ENCODE measurements at regions of chr20 and their contacts with region 1.

Region 1: GRCh38 chr20:54475334-54476168 is at the start of gene DOK5:
- DNase-seq: peak; percentile 52 to 60
- ATAC-seq: peak; percentile 85 to 91 (median 89)
- H3K4me3 ChIP-seq: peak within 1 kb of the TSS; percentile 46 to 85 (median 67)
- H3K27ac ChIP-seq: peak within 1 kb of the TSS in 8 of 10 donors; percentile 35 to 82 (median 60)
- H3K4me1 ChIP-seq: peaks cover 0 to 30% (median 6%) of the 10 kb centered on the region in 9 donors
- H3K27me3 ChIP-seq: peaks cover 0 to 60% (median 4%) of the 10 kb centered on the region in 7 donors
- CTCF ChIP-seq: peak in 1 of 9 donors; percentile 15
- total RNA-seq, gene DOK5: 0.51 to 21.1 (median 9.6) TPM

Region 2: GRCh38 chr20:54219751-54220426 is 255.7 kb before region 1 on chr20:
- intact Hi-C with region 1: loop called in 2 of 10 experiments (anchors 5 to 10 kb)
- DNase-seq: no peak
- ATAC-seq: no peak
- H3K4me3 ChIP-seq: no peak overlapping the region
- H3K27ac ChIP-seq: no peak overlapping the region
- H3K4me1 ChIP-seq: peaks cover 0 to 43% (median 22%) of the 10 kb centered on the region in 9 donors
- H3K27me3 ChIP-seq: no peaks in the 10 kb centered on the region
- CTCF ChIP-seq: peak; percentile 29 to 74 (median 59)

Region 3: GRCh38 chr20:54382422-54382821 is 93.1 kb before region 1 on chr20:
- intact Hi-C with region 1: no loop called
- DNase-seq: no peak
- ATAC-seq: no peak
- H3K4me3 ChIP-seq: no peak overlapping the region
- H3K27ac ChIP-seq: no peak overlapping the region
- H3K4me1 ChIP-seq: no peaks in the 10 kb centered on the region
- H3K27me3 ChIP-seq: peaks cover 0 to 5% (median 0%) of the 10 kb centered on the region in 7 donors
- CTCF ChIP-seq: no peak

Region 4: GRCh38 chr20:54573838-54574237 is 98.3 kb after region 1 on chr20:
- intact Hi-C with region 1: loop called in 1 of 10 experiments (anchors 10 kb)
- DNase-seq: peak; percentile 11 to 53
- ATAC-seq: peak in 7 of 8 donors; percentile 18 to 85 (median 78)
- H3K4me3 ChIP-seq: no peak overlapping the region
- H3K27ac ChIP-seq: peak overlapping the region in 3 of 10 donors; percentile 11 to 18 (median 16)
- H3K4me1 ChIP-seq: peaks cover 0 to 18% (median 0%) of the 10 kb centered on the region in 9 donors
- H3K27me3 ChIP-seq: no peaks in the 10 kb centered on the region
- CTCF ChIP-seq: no peak

Region 5: GRCh38 chr20:54585227-54585626 is 109.7 kb after region 1 on chr20:
- intact Hi-C with region 1: no loop called
- DNase-seq: no peak
- ATAC-seq: no peak
- H3K4me3 ChIP-seq: no peak overlapping the region
- H3K27ac ChIP-seq: no peak overlapping the region
- H3K4me1 ChIP-seq: no peaks in the 10 kb centered on the region
- H3K27me3 ChIP-seq: no peaks in the 10 kb centered on the region
- CTCF ChIP-seq: no peak

Region 6: GRCh38 chr20:54624706-54625390 is 149.3 kb after region 1 on chr20:
- intact Hi-C with region 1: loop called in 3 of 10 experiments (anchors 10 kb)
- DNase-seq: peak in 1 of 2 donors; percentile 43
- ATAC-seq: peak in 7 of 8 donors; percentile 30 to 83 (median 67)
- H3K4me3 ChIP-seq: no peak overlapping the region
- H3K27ac ChIP-seq: peak overlapping the region in 6 of 10 donors; percentile 3 to 53 (median 17)
- H3K4me1 ChIP-seq: peaks cover 0 to 13% (median 3%) of the 10 kb centered on the region in 9 donors
- H3K27me3 ChIP-seq: no peaks in the 10 kb centered on the region
- CTCF ChIP-seq: no peak

Measured in heart right ventricle (tissue), 16 donors.